ENCODE measurements at regions of chr15 and their contacts with region 1.

Region 1: GRCh38 chr15:33132722-33133345 is 61.7 kb downstream of the FMN1 start:
- DNase-seq: peak; percentile 44 to 62 (median 53)
- H3K4me3 ChIP-seq: no peak overlapping the region
- H3K27ac ChIP-seq: no peak overlapping the region
- H3K4me1 ChIP-seq: peaks cover 0 to 3% (median under 1%) of the 10 kb centered on the region in 4 experiments
- H3K27me3 ChIP-seq: no peaks in the 10 kb centered on the region

Region 2: GRCh38 chr15:32899126-32899596 is 233.7 kb before region 1 on chr15:
- CTCF ChIA-PET with region 1: no interaction called
- POLR2A ChIA-PET with region 1: no interaction called
- DNase-seq: no peak
- H3K4me3 ChIP-seq: no peak overlapping the region
- H3K27ac ChIP-seq: no peak overlapping the region
- H3K4me1 ChIP-seq: no peaks in the 10 kb centered on the region
- H3K27me3 ChIP-seq: no peaks in the 10 kb centered on the region

Region 3: DNA sequence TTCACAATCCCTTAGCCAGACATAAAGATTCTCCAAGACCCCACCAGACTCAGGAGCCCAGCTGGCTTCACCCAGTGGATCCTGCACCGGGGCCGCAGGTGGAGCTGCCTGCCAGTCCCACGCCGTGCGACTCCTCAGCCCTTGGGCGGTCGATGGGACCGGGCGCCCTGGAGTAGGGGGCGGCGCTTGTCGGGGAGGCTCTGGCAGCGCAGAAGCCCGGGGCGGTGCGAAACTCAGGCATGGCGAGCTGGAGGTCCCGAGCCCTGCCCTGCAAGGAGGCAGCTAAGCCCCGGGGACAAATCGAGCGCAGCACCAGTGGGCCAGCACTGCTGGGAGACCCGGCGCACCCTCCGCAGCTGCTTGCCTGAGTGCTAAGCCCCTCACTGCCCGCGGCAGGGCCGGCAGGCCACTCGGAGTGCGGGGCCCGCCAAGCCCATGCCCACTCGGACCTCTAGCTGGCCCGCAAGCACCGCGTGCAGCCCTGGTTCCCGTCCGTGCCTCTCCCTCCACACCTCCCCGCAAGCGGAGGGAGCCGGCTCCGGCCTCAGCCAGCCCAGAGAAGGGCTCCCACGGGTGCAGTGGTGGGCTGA is 113.4 kb before region 1 on chr15:
- CTCF ChIA-PET with region 1: interaction called, 15 read pairs
- POLR2A ChIA-PET with region 1: no interaction called
- DNase-seq: no peak
- H3K4me3 ChIP-seq: no peak overlapping the region
- H3K27ac ChIP-seq: no peak overlapping the region
- H3K4me1 ChIP-seq: peaks cover 0 to 4% (median 3%) of the 10 kb centered on the region in 4 experiments
- H3K27me3 ChIP-seq: no peaks in the 10 kb centered on the region

Region 4: GRCh38 chr15:33086507-33087121 is 46.2 kb before region 1 on chr15:
- CTCF ChIA-PET with region 1: interaction called, 162 read pairs
- POLR2A ChIA-PET with region 1: interaction called, 4 read pairs
- DNase-seq: peak; percentile 64 to 83 (median 80)
- H3K4me3 ChIP-seq: no peak overlapping the region
- H3K27ac ChIP-seq: no peak overlapping the region
- H3K4me1 ChIP-seq: no peaks in the 10 kb centered on the region
- H3K27me3 ChIP-seq: peaks cover 0 to 3% (median 0%) of the 10 kb centered on the region in 5 experiments

Region 5: GRCh38 chr15:33098094-33099040 is 34.5 kb before region 1 on chr15:
- CTCF ChIA-PET with region 1: interaction called, 162 read pairs
- POLR2A ChIA-PET with region 1: no interaction called
- DNase-seq: peak in 2 of 3 donors; percentile 7 to 11
- H3K4me3 ChIP-seq: no peak overlapping the region
- H3K27ac ChIP-seq: no peak overlapping the region
- H3K4me1 ChIP-seq: peaks cover 0 to 23% (median 5%) of the 10 kb centered on the region in 4 experiments
- H3K27me3 ChIP-seq: peaks cover 0 to 2% (median 0%) of the 10 kb centered on the region in 5 experiments

Region 6: GRCh38 chr15:33150998-33151397 is 18.2 kb after region 1 on chr15:
- CTCF ChIA-PET with region 1: interaction called, 26 read pairs
- POLR2A ChIA-PET with region 1: no interaction called
- DNase-seq: peak in 2 of 3 donors; percentile 77 to 78
- H3K4me3 ChIP-seq: no peak overlapping the region
- H3K27ac ChIP-seq: no peak overlapping the region
- H3K4me1 ChIP-seq: peaks cover 14 to 55% (median 30%) of the 10 kb centered on the region in 4 experiments
- H3K27me3 ChIP-seq: peaks cover 0 to 13% (median 0%) of the 10 kb centered on the region in 5 experiments

Region 7: DNA sequence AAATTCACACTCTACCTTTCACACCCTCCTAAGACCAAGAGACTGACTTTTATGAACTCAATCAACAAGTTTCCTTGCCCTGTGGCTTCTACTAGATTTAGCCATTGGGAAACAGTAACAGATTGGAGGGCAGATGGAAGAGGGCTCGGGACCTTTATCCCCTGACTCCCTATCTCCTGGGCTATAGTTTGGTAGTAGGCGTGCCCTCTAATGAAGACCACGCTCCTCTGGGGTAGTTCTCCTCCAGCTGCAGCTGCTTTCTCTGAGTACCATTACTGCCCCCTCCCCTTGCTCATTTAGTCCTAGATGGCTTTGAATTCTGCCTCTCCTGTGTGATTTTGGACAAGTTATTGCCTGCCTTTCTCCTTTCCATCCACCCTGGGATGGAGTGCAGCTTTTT is 28.4 kb after region 1 on chr15:
- CTCF ChIA-PET with region 1: no interaction called
- POLR2A ChIA-PET with region 1: no interaction called
- DNase-seq: no peak
- H3K4me3 ChIP-seq: no peak overlapping the region
- H3K27ac ChIP-seq: no peak overlapping the region
- H3K4me1 ChIP-seq: peaks cover 0 to 3% (median 0%) of the 10 kb centered on the region in 4 experiments
- H3K27me3 ChIP-seq: peaks cover 0 to 47% (median 23%) of the 10 kb centered on the region in 5 experiments

Measured in common myeloid progenitor, CD34-positive (primary cell).